MCF 10A (cell line): ENCODE measurements at regions of chr2 and their contacts with region 1.

Region 1: GRCh38 chr2:36785179-36785795 is 88.8 kb downstream of the VIT start:
- DNase-seq: peak; percentile 73
- H3K4me3 Mint-ChIP-seq: no peak overlapping the region
- H3K27ac Mint-ChIP-seq: no peak overlapping the region
- H3K4me1 Mint-ChIP-seq: no peaks in the 10 kb centered on the region
- H3K27me3 Mint-ChIP-seq: peaks cover 32% of the 10 kb centered on the region
- CTCF ChIP-seq: peak; percentile 82

Region 2: DNA sequence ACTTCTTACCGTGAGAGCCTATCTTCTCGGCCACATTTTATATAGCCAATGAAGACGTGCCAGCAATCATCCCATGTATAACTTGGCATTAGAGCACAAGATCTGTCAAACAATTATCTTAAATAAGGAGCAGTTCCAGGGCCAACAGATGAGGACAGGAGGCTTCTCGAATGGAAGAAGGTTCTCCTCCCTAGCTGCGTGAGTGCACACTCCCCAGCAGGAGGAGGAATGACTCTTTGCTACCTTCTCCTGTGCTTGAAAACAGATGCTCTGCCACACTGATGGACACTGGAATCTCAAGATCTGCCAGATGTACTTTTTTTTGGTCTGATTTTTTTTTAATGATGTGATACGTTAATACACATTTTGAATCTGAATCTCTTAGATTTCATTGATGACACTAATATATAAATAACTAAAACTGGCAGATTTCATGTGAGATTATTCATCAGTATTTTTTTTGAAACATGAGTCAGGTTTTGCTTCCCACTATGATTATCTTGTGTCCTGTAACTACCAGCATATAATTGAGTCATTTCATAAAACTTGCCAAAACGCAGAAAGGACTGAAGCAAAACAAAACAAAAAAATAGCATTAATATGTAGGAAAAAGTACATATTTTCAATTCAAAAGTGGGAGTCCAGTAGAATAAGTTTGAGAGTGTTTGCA is 89.4 kb before region 1 on chr2:
- CTCF ChIA-PET with region 1: interaction called, 12 read pairs
- POLR2A ChIA-PET with region 1: no interaction called
- intact Hi-C with region 1: no loop called
- DNase-seq: peak; percentile 38
- H3K4me3 Mint-ChIP-seq: no peak overlapping the region
- H3K27ac Mint-ChIP-seq: no peak overlapping the region
- H3K4me1 Mint-ChIP-seq: peaks cover 9% of the 10 kb centered on the region
- H3K27me3 Mint-ChIP-seq: no peaks in the 10 kb centered on the region
- CTCF ChIP-seq: no peak

Region 3: DNA sequence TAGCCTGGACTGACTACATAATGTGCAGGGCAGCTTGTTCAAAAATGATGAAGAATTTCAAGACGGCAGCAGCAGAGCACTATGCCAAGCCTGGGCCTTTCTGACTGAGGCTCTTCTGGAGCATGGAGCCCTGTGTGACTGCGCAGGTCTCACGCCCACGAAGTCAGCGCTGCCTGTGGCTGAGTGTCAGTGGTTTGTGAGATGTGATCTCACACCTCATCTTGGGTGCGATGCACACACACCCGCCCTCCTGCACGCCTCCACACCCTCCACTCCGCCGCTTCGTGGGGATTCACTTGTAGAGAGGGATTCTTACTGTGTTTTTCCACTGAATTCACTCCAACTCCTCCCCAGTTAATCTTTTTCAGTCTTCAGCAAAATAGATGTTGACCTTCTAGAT is 15.1 kb after region 1 on chr2:
- CTCF ChIA-PET with region 1: interaction called, 60 read pairs
- POLR2A ChIA-PET with region 1: no interaction called
- intact Hi-C with region 1: no loop called
- DNase-seq: no peak
- H3K4me3 Mint-ChIP-seq: no peak overlapping the region
- H3K27ac Mint-ChIP-seq: no peak overlapping the region
- H3K4me1 Mint-ChIP-seq: peaks cover 10% of the 10 kb centered on the region
- H3K27me3 Mint-ChIP-seq: peaks cover 29% of the 10 kb centered on the region
- CTCF ChIP-seq: no peak

Region 4: DNA sequence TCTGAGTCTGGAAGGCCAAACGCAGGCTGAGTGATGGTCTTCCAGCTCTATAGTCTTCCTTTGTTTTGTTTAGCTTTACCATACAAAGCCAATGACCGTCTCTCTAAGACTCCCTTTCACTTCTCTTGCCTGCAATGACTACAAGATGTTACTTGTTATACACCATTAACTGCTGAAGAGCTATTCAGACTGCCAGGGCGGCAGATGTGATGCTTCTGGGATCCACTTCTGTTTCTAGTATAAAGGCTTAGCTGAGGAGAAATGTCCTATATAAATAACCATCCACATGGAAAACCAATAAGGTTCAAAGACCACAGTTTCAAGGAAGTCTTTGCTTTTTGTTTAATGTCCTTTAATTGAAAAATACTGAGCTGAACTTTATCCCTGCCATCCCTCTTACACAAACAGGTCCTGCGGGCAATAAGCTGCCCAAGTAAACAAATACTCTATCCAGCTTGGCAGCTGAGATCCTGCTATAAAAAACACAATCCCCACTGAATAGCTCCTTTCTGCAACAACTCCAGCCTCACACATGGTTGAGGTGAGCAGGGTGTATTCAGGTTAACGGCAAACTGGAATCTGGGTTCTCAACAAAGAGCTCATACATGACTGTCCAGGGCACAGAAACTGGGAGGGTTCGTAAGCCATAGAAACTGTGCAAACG is 35.8 kb after region 1 on chr2:
- CTCF ChIA-PET with region 1: interaction called, 10 read pairs
- POLR2A ChIA-PET with region 1: no interaction called
- intact Hi-C with region 1: no loop called
- DNase-seq: no peak
- H3K4me3 Mint-ChIP-seq: no peak overlapping the region
- H3K27ac Mint-ChIP-seq: no peak overlapping the region
- H3K4me1 Mint-ChIP-seq: no peaks in the 10 kb centered on the region
- H3K27me3 Mint-ChIP-seq: no peaks in the 10 kb centered on the region
- CTCF ChIP-seq: no peak

Region 5: GRCh38 chr2:37005118-37005868 is 220.0 kb after region 1 on chr2:
- CTCF ChIA-PET with region 1: interaction called, 5 read pairs
- POLR2A ChIA-PET with region 1: interaction called, 3 read pairs
- intact Hi-C with region 1: loop called (anchors 2 kb)
- DNase-seq: peak; percentile 36
- H3K4me3 Mint-ChIP-seq: no peak overlapping the region
- H3K27ac Mint-ChIP-seq: no peak overlapping the region
- H3K4me1 Mint-ChIP-seq: no peaks in the 10 kb centered on the region
- H3K27me3 Mint-ChIP-seq: no peaks in the 10 kb centered on the region
- CTCF ChIP-seq: peak; percentile 40